CD4-positive, alpha-beta memory T cell (primary cell): ENCODE measurements at regions of chr1 and their contacts with region 1.

Region 1: DNA sequence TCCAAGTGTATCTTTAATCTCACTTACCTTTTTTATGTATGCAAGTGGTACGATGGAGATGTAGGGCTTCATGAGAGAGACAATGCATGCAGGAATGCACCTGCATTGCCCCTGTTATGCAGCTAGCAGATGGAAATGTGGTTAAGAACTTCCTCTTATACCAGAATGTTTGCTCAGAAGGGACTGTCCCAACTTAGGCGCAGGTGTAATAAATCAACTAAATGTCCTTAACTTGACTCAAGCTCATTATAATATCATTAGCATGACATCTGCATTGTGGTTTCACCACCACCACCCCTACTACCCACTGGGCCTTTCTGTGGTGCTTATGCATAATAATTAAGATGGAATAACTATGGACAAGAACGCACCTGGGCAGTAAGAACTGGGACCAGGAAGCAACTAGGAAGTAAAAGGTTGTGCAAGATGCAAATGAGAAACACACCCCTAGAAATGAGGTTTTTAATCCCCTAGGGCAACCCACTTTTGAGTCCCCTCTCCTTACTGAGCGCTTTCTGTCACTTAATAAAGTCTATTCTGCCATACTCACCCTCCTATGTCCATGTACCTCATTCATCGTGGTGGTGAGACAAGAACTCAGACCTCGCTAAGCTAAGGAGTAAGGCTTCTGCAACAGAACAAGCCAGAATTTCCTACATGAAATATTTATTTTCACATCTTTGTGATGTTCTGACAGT is 1103.3 kb upstream of the B3GALT2 start:
- DNase-seq: peak; percentile 72 to 89 (median 81)
- H3K4me3 ChIP-seq: peak overlapping the region; percentile 2 to 42
- H3K4me3 Mint-ChIP-seq: peak overlapping the region; percentile 60 to 84 (median 75)
- H3K27ac ChIP-seq: peak overlapping the region; percentile 50
- H3K27ac Mint-ChIP-seq: peak overlapping the region; percentile 12 to 86 (median 75)
- H3K4me1 ChIP-seq: peaks cover 22% of the 10 kb centered on the region
- H3K4me1 Mint-ChIP-seq: peaks cover 22 to 31% (median 24%) of the 10 kb centered on the region in 4 donors
- H3K27me3 ChIP-seq: no peaks in the 10 kb centered on the region
- H3K27me3 Mint-ChIP-seq: no peaks in the 10 kb centered on the region

Region 2: DNA sequence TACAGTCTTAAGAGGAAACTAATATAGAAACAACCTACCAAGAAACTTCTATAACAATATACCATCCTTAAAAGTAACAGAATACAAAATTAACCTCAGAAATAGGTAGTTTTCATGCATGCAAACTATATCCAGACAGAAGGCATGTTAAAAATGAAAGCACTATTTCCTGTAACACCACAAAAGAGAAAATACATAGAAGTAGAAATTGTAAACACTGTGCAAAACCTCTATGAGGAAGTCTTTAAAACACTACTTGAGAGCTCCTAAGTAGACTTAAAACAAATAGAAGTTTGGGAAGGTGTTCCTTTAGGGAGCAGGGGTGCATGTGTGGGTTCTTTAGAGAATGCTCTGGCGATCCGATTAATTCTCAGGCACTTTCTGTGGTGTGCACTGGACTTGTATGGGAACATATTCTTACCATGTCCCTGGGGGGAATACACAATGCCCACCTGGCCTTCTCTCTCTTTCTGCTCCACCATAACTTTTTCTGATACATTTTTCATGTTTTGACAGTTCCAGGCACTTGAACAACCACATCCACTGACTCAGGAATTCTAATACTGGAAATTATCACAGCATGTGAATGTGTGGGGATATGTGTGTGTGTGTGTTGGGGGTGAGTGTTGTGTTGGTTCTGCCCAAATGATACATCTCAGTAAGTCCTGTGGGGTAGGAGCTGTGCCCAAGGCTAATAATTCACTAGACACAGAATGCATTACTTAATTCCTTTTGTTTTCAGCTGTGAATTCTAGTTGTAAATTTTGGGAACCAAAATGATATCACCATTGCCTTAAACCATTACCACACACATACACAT is 237.0 kb before region 1 on chr1:
- CTCF ChIA-PET with region 1: no interaction called
- POLR2A ChIA-PET with region 1: no interaction called
- intact Hi-C with region 1: loop called (anchors 2 kb)
- DNase-seq: peak in 3 of 5 donors; percentile 13 to 34 (median 24)
- H3K4me3 ChIP-seq: no peak overlapping the region
- H3K4me3 Mint-ChIP-seq: peak overlapping the region; percentile 10 to 79 (median 65)
- H3K27ac ChIP-seq: peak overlapping the region; percentile 20
- H3K27ac Mint-ChIP-seq: peak overlapping the region; percentile 50 to 93 (median 90)
- H3K4me1 ChIP-seq: peaks cover 62% of the 10 kb centered on the region
- H3K4me1 Mint-ChIP-seq: peaks cover 55 to 59% (median 58%) of the 10 kb centered on the region in 4 donors
- H3K27me3 ChIP-seq: no peaks in the 10 kb centered on the region
- H3K27me3 Mint-ChIP-seq: no peaks in the 10 kb centered on the region

Region 3: DNA sequence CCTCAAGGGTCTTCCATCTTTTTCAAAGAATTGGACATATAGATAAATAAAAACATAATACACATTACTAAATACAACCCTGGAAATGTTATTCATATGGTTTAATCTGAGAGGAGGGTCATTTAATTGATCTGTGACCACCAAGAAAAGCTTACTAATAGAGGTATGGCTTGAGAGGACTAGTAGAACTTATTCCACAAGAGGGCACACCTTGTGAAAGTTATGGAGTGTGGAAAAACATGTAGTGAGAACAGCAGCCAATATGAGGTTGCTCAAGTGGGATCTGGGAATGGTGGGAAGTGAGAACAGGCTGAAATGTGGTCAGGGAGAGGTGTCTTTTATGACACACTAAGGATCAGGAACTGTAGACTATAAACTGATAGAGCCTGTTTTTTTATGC is 129.8 kb before region 1 on chr1:
- CTCF ChIA-PET with region 1: no interaction called
- POLR2A ChIA-PET with region 1: no interaction called
- intact Hi-C with region 1: loop called (anchors 10 kb)
- DNase-seq: no peak
- H3K4me3 ChIP-seq: no peak overlapping the region
- H3K4me3 Mint-ChIP-seq: no peak overlapping the region
- H3K27ac ChIP-seq: no peak overlapping the region
- H3K27ac Mint-ChIP-seq: no peak overlapping the region
- H3K4me1 ChIP-seq: no peaks in the 10 kb centered on the region
- H3K4me1 Mint-ChIP-seq: peaks cover 0 to 3% (median under 1%) of the 10 kb centered on the region in 4 donors
- H3K27me3 ChIP-seq: no peaks in the 10 kb centered on the region
- H3K27me3 Mint-ChIP-seq: no peaks in the 10 kb centered on the region

Region 4: DNA sequence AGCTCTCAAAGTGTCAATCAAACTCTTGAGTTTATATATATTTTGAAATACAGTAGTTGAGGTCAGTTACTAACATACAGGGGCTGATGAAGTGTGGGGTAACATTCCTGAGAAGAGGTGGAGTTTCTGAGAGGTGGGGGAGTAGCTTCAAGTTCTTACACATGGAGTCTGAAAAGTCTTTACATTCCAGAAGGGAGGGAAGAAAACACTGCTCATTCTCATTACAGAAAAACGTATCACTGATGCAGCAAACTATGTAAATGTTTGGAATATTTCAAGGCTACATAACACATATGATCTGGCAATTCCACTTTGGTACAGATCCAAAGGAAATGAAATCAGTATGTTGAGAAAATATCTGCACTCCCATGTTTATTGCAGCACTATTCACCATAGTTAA is 37.5 kb before region 1 on chr1:
- CTCF ChIA-PET with region 1: no interaction called
- POLR2A ChIA-PET with region 1: no interaction called
- intact Hi-C with region 1: no loop called
- DNase-seq: no peak
- H3K4me3 ChIP-seq: no peak overlapping the region
- H3K4me3 Mint-ChIP-seq: no peak overlapping the region
- H3K27ac ChIP-seq: no peak overlapping the region
- H3K27ac Mint-ChIP-seq: no peak overlapping the region
- H3K4me1 ChIP-seq: no peaks in the 10 kb centered on the region
- H3K4me1 Mint-ChIP-seq: peaks cover 0 to 9% (median 2%) of the 10 kb centered on the region in 4 donors
- H3K27me3 ChIP-seq: no peaks in the 10 kb centered on the region
- H3K27me3 Mint-ChIP-seq: no peaks in the 10 kb centered on the region

Region 5: GRCh38 chr1:194420706-194421105 is 131.0 kb after region 1 on chr1:
- CTCF ChIA-PET with region 1: no interaction called
- POLR2A ChIA-PET with region 1: no interaction called
- intact Hi-C with region 1: no loop called
- DNase-seq: no peak
- H3K4me3 ChIP-seq: no peak overlapping the region
- H3K4me3 Mint-ChIP-seq: no peak overlapping the region
- H3K27ac ChIP-seq: no peak overlapping the region
- H3K27ac Mint-ChIP-seq: no peak overlapping the region
- H3K4me1 ChIP-seq: no peaks in the 10 kb centered on the region
- H3K4me1 Mint-ChIP-seq: no peaks in the 10 kb centered on the region
- H3K27me3 ChIP-seq: no peaks in the 10 kb centered on the region
- H3K27me3 Mint-ChIP-seq: peaks cover 0 to 6% of the 10 kb centered on the region in 2 donors